Ascending aorta (tissue), 2 donors: ENCODE measurements at regions of chr2 and their contacts with region 1.

Region 1: DNA sequence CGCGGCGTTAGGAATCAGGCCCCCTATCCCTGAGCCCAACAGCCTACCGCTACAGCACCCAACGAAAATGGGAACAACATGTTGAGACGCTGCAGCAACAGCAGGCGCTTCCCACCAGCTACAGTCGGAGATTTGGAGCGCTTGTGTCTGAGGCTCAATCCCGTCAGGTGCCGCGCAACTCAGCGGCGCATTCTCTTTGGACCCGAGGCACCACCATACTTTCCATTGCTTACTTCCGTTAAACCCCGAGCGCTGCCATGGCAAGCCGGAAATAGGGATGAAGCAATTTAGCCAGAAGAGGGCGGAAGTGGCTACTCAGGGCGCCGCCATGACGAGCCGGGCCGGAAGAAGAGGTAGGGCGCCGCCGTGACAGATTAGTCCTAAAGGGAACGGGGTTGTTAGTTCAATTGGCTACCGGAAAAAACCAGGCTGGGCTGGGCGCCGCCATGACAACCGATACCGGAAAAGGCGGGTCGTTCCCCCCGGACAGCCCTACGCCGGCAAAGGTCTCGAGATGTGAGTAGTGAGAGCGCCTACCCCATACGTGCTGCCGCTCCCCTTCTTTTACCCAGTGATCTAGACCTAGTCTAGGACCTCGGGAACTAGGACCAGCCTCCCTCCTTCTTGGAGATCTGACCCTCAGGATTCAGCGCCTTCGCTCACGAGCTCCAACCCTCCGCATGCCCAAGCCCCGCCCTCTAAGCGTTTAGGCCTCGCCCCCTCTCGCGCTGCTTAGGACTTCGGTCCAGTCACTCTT is at the start of gene CHCHD5:
- DNase-seq: peak; percentile 85 to 98
- H3K4me3 ChIP-seq: peak within 1 kb of the TSS; percentile 69 to 78
- H3K27ac ChIP-seq: peak within 1 kb of the TSS; percentile 92 to 95
- H3K4me1 ChIP-seq: peaks cover 4 to 13% of the 10 kb centered on the region in 2 donors
- H3K27me3 ChIP-seq: no peaks in the 10 kb centered on the region
- CTCF ChIP-seq: peak in 1 of 3 experiments; percentile 28
- total RNA-seq, gene CHCHD5: 26.5 TPM

Region 2: GRCh38 chr2:112254466-112255239 is 329.7 kb before region 1 on chr2 and contains the start of gene ZC3H8:
- intact Hi-C with region 1: loop called (anchors 5 kb)
- DNase-seq: peak; percentile 59 to 96
- H3K4me3 ChIP-seq: peak within 1 kb of the TSS; percentile 65 to 76
- H3K27ac ChIP-seq: peak within 1 kb of the TSS; percentile 61 to 69
- H3K4me1 ChIP-seq: peaks cover 0 to 7% of the 10 kb centered on the region in 2 donors
- H3K27me3 ChIP-seq: no peaks in the 10 kb centered on the region
- CTCF ChIP-seq: peak in 1 of 3 experiments; percentile 9
- total RNA-seq, gene ZC3H8: 0.11 TPM

Region 3: GRCh38 chr2:112481050-112481527 is 103.2 kb before region 1 on chr2:
- intact Hi-C with region 1: loop called (anchors 2 kb)
- DNase-seq: peak; percentile 22 to 88
- H3K4me3 ChIP-seq: peak overlapping the region; percentile 81 to 84
- H3K27ac ChIP-seq: peak overlapping the region; percentile 74 to 83
- H3K4me1 ChIP-seq: peaks cover 0 to 19% of the 10 kb centered on the region in 2 donors
- H3K27me3 ChIP-seq: no peaks in the 10 kb centered on the region
- CTCF ChIP-seq: peak; percentile 57 to 91 (median 80)

Region 4: DNA sequence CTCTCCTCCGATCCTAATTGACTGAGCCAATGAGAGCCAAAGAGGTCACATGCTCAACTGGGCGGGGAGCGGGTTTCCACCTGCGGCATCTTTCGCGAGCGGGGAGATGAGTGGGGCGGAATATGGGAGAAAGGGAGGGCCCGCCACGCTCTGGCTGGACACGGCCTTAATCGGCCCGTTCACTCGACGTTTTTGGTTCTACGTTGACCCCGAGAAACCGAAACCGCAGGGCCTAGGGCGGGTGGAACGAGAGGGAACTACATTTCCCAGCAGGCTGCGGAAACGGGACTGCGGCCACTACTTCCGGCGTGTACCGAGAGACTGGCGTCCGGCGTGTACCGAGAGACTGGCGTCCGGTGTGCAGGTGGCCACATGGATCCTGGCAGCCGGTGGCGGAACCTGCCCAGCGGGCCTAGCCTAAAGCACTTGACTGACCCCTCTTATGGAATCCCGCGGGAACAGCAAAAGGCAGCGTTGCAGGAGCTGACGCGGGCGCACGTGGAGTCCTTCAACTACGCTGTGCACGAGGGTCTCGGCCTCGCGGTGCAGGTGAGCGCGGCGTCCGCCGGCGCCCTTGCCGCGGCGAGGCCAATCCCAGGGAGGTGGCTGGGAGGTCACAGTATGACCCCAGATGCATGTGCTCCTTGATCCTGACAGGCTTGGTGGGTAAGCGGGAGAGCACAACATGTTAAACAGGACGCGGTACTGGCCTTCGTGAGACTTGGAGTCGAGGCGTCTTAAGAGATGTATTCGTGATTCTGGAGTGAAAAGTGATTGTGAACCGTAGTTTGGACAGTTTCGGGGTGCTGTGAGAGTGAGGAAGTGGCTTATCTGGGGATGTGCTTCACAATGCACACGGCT is 42.0 kb before region 1 on chr2 and contains the start of gene POLR1B:
- intact Hi-C with region 1: loop called (anchors 1 kb)
- DNase-seq: peak; percentile 19 to 90
- H3K4me3 ChIP-seq: peak within 1 kb of the TSS; percentile 86
- H3K27ac ChIP-seq: peak within 1 kb of the TSS; percentile 91 to 93
- H3K4me1 ChIP-seq: peaks cover 3 to 11% of the 10 kb centered on the region in 2 donors
- H3K27me3 ChIP-seq: no peaks in the 10 kb centered on the region
- CTCF ChIP-seq: no peak
- total RNA-seq, gene POLR1B: 3.6 TPM

Region 5: DNA sequence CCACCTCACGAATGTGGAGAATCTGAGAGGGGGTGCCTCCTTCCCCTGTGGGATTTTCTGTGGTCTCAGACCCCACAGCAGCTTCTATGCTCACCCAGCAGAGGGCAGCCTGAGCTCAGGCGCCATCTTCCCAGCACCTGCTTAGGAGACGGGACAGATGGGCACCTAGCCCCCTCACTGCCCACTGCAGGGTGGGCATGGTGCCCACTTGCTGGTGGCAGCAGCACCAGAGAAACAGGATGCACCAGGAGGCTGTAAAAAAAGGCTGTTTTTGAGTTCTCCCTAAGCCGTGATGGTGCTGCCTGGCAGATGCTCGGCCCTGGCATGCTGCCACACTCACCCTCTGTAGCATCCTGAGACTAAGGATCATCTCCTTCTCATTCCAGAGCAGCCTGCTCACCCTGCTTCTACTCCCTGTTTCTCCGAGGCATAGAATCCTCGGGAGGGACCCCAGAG is 42.3 kb after region 1 on chr2:
- intact Hi-C with region 1: loop called (anchors 5 kb)
- DNase-seq: peak in 1 of 2 donors; percentile 78
- H3K4me3 ChIP-seq: peak overlapping the region; percentile 5 to 37
- H3K27ac ChIP-seq: peak overlapping the region; percentile 86 to 88
- H3K4me1 ChIP-seq: peaks cover 0 to 15% of the 10 kb centered on the region in 2 donors
- H3K27me3 ChIP-seq: no peaks in the 10 kb centered on the region
- CTCF ChIP-seq: peak; percentile 68 to 85 (median 72)